Mammary epithelial cell (primary cell): ENCODE measurements at regions of chr7 and their contacts with region 1.

Region 1: DNA sequence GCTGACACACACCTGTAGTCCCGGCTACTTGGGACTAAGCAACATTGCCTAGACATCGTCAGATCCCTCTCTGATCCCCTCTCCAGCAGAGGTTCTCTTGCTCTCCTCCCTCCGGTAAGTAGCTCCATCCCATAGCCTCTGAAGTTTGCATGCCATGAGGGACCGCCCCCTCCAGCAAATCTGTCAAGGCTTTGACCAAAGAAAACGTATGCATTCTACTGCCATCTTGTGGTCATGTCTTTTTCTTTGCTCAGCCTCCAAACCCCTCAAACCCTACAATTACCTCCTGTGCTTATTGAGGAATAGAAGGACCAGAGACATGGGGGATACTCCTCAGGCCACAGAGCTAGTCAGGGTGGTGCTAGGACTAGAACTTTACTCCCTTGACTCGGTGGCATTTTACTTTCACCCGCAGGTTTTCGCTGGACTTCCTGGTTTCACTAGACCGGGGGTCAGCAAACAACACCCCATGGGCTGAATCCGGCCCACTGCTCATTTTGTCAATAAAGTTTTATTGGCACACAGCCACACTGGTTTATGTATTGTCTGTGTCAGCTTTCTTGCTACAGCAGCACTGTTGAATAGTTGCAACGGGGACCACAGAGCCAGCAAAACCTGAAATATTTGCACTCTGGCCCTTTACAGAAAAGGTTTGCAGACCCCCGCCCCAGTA is 202.6 kb upstream of the FOXK1 start:
- DNase-seq: peak; percentile 55
- H3K4me3 ChIP-seq: no peak overlapping the region
- H3K27ac ChIP-seq: no peak overlapping the region
- H3K4me1 ChIP-seq: no peaks in the 10 kb centered on the region
- H3K27me3 ChIP-seq: no peaks in the 10 kb centered on the region
- CTCF ChIP-seq: peak; percentile 8 to 23

Region 2: DNA sequence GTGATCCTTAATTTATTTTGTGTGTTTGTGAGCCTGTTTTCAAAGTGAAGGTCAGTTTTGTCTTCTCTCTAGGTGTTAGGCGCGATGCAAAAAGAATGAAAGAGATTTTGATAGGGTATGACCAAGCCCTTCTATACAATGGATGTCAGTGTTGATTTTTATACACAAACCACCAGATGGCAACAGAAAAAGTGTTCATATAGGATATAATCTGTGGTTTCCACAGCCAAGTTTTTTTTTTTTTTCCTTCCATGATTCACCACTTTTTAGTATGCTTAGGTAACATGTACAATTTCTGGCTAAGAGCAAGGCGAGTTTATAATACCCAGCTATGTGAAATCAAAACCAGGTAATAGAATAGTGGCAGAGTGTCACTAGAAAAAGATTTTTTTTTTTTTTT is 1170.4 kb before region 1 on chr7:
- CTCF ChIA-PET with region 1: no interaction called
- dilution Hi-C with region 1: no loop called
- in situ Hi-C with region 1: no loop called
- intact Hi-C with region 1: loop called (anchors 5 kb)
- DNase-seq: peak; percentile 64
- H3K4me3 ChIP-seq: no peak overlapping the region
- H3K27ac ChIP-seq: no peak overlapping the region
- H3K4me1 ChIP-seq: no peaks in the 10 kb centered on the region
- H3K27me3 ChIP-seq: no peaks in the 10 kb centered on the region
- CTCF ChIP-seq: no peak

Region 3: DNA sequence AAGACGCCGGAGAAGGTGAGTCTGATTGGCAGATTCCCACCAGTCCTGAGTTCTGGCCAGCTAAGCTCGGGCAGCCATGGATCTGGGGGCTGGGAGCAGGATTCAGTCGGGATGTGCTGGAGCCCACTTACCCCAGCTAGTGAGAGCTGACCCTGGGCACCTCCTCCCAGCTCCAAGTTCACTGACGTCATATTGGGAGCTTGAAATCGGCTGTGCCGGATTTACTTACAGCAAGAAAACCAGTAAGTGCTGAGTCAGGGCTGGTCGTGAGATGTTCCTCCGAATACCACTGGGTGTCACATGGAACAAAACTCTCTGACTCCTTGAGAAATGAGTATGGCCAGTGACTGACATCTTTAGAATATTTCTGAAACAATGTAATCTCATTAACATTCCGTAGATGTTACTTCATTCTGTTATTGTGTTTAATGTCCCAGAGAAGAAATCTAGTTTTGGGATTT is 557.3 kb before region 1 on chr7:
- CTCF ChIA-PET with region 1: interaction called, 4 read pairs
- dilution Hi-C with region 1: no loop called
- in situ Hi-C with region 1: loop called in 1 of 2 experiments (anchors 25 kb)
- intact Hi-C with region 1: no loop called
- DNase-seq: peak; percentile 70
- H3K4me3 ChIP-seq: no peak overlapping the region
- H3K27ac ChIP-seq: no peak overlapping the region
- H3K4me1 ChIP-seq: no peaks in the 10 kb centered on the region
- H3K27me3 ChIP-seq: no peaks in the 10 kb centered on the region
- CTCF ChIP-seq: peak in 1 of 2 donors; percentile 33

Region 4: DNA sequence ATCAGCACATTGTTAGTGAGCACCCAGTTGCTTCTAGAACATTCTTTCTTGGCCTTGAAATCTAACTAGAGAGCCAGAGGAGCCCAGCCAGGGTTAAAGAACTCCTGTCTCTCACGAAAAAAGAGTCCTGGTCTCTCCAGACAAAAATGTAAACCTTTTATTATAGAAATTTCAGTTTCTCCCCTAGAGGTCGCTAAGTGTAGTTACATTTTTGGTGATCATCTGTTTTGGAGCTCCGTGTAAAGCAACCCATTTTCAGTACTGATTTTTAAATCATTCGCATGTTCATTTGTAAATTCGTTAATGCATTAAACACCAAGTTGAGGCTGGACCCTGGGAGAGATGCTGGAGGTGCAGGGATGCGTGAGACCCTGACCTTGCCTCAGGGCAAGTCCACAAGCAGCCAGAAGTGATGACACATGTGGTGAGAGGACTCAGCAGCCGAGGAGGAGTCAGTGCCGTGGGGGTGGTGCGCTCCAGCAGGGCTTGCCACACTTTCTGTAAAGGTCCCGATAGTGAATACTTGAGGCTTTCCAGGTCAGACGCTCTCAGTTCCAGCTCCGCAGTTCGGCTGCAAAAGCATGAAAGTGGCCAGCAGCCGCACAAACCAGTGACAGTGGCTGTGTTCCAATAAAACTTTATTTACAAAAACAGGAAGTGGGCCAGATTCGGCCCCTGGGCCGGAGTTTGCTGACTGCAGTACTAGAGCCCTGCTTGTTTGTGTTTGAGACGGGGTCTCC is 376.0 kb before region 1 on chr7:
- CTCF ChIA-PET with region 1: no interaction called
- dilution Hi-C with region 1: no loop called
- in situ Hi-C with region 1: no loop called
- intact Hi-C with region 1: loop called (anchors 1 kb)
- DNase-seq: peak; percentile 43
- H3K4me3 ChIP-seq: no peak overlapping the region
- H3K27ac ChIP-seq: no peak overlapping the region
- H3K4me1 ChIP-seq: no peaks in the 10 kb centered on the region
- H3K27me3 ChIP-seq: no peaks in the 10 kb centered on the region
- CTCF ChIP-seq: no peak

Region 5: GRCh38 chr7:4383584-4383983 is 95.9 kb before region 1 on chr7:
- CTCF ChIA-PET with region 1: no interaction called
- dilution Hi-C with region 1: no loop called
- in situ Hi-C with region 1: no loop called
- intact Hi-C with region 1: no loop called
- DNase-seq: no peak
- H3K4me3 ChIP-seq: no peak overlapping the region
- H3K27ac ChIP-seq: no peak overlapping the region
- H3K4me1 ChIP-seq: no peaks in the 10 kb centered on the region
- H3K27me3 ChIP-seq: no peaks in the 10 kb centered on the region
- CTCF ChIP-seq: no peak